IMR-90 (cell line): ENCODE measurements at regions of chr15 and their contacts with region 1.

Region 1: GRCh38 chr15:34708422-34708821 is 46.4 kb downstream of the GJD2 start:
- DNase-seq: peak; percentile 66
- ATAC-seq: peak; percentile 82
- H3K4me3 ChIP-seq: no peak overlapping the region
- H3K27ac ChIP-seq: no peak overlapping the region
- H3K4me1 ChIP-seq: peaks cover 5% of the 10 kb centered on the region
- H3K27me3 ChIP-seq: peaks cover 8% of the 10 kb centered on the region
- CTCF ChIP-seq: peak; percentile 91
- POLR2A ChIP-seq: no peak
- RAD21 ChIP-seq: peak; percentile 86

Region 2: GRCh38 chr15:34621675-34622074 is 86.7 kb before region 1 on chr15:
- CTCF ChIA-PET with region 1: interaction called, 5 read pairs
- POLR2A ChIA-PET with region 1: no interaction called
- dilution Hi-C with region 1: no loop called
- in situ Hi-C with region 1: no loop called
- intact Hi-C with region 1: loop called (anchors 2 kb)
- DNase-seq: peak; percentile 58
- ATAC-seq: peak; percentile 81
- H3K4me3 ChIP-seq: no peak overlapping the region
- H3K27ac ChIP-seq: no peak overlapping the region
- H3K4me1 ChIP-seq: no peaks in the 10 kb centered on the region
- H3K27me3 ChIP-seq: peaks cover 3% of the 10 kb centered on the region
- CTCF ChIP-seq: peak; percentile 64
- POLR2A ChIP-seq: no peak
- RAD21 ChIP-seq: peak; percentile 75

Region 3: GRCh38 chr15:34637305-34637704 is 71.1 kb before region 1 on chr15:
- CTCF ChIA-PET with region 1: no interaction called
- POLR2A ChIA-PET with region 1: no interaction called
- dilution Hi-C with region 1: no loop called
- in situ Hi-C with region 1: no loop called
- intact Hi-C with region 1: no loop called
- DNase-seq: no peak
- ATAC-seq: no peak
- H3K4me3 ChIP-seq: no peak overlapping the region
- H3K27ac ChIP-seq: no peak overlapping the region
- H3K4me1 ChIP-seq: no peaks in the 10 kb centered on the region; the same call in 1 of the 2 replicates
- H3K27me3 ChIP-seq: no peaks in the 10 kb centered on the region
- CTCF ChIP-seq: no peak
- POLR2A ChIP-seq: no peak
- RAD21 ChIP-seq: no peak

Region 4: GRCh38 chr15:34795267-34796081 is 87.1 kb after region 1 on chr15 and contains the start of gene ACTC1:
- CTCF ChIA-PET with region 1: no interaction called
- POLR2A ChIA-PET with region 1: no interaction called
- dilution Hi-C with region 1: no loop called
- in situ Hi-C with region 1: no loop called
- intact Hi-C with region 1: loop called (anchors 5 kb)
- DNase-seq: peak; percentile 52
- ATAC-seq: peak; percentile 95
- H3K4me3 ChIP-seq: no peak within 1 kb of the TSS
- H3K27ac ChIP-seq: no peak within 1 kb of the TSS; the same call in 1 of the 2 replicates
- H3K4me1 ChIP-seq: peaks cover 11% of the 10 kb centered on the region
- H3K27me3 ChIP-seq: peaks cover 1% of the 10 kb centered on the region; the same call in 1 of the 2 replicates
- CTCF ChIP-seq: peak; percentile 39; the same call in 1 of the 2 replicates
- POLR2A ChIP-seq: no peak
- RAD21 ChIP-seq: peak; percentile 49
- total RNA-seq, gene ACTC1: 0.83 and 1.1 TPM in 2 replicates

Region 5: DNA sequence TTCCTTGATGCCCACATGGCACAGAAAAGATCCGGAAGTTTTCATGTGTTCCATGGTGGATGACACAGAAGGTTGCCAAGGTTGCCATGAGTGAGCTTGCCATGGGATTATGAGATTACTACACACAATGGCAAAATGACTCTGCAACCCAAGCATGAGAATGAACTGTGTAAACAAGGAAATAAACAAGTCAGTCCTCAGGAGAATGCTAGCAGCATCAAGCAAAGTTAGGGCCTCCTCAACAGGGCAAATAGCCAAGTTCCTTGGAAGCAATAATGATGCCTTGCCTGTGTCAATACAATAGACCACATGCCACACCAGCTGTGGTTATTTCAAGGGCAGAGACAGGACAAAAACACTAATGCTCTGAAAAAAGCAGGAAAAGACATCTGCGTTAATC is 219.3 kb after region 1 on chr15:
- CTCF ChIA-PET with region 1: interaction called, 3 read pairs
- POLR2A ChIA-PET with region 1: no interaction called
- dilution Hi-C with region 1: no loop called
- in situ Hi-C with region 1: loop called (anchors 5 kb)
- intact Hi-C with region 1: no loop called
- DNase-seq: no peak
- ATAC-seq: no peak
- H3K4me3 ChIP-seq: no peak overlapping the region
- H3K27ac ChIP-seq: no peak overlapping the region
- H3K4me1 ChIP-seq: no peaks in the 10 kb centered on the region
- H3K27me3 ChIP-seq: no peaks in the 10 kb centered on the region
- CTCF ChIP-seq: no peak
- POLR2A ChIP-seq: no peak
- RAD21 ChIP-seq: no peak

Region 6: GRCh38 chr15:36645106-36645505 is 1936.7 kb after region 1 on chr15:
- CTCF ChIA-PET with region 1: no interaction called
- POLR2A ChIA-PET with region 1: no interaction called
- dilution Hi-C with region 1: no loop called
- in situ Hi-C with region 1: no loop called
- intact Hi-C with region 1: no loop called
- DNase-seq: peak; percentile 4
- ATAC-seq: no peak
- H3K4me3 ChIP-seq: no peak overlapping the region
- H3K27ac ChIP-seq: no peak overlapping the region
- H3K4me1 ChIP-seq: no peaks in the 10 kb centered on the region
- H3K27me3 ChIP-seq: no peaks in the 10 kb centered on the region
- CTCF ChIP-seq: peak; percentile 23; the same call in 1 of the 2 replicates
- POLR2A ChIP-seq: no peak
- RAD21 ChIP-seq: peak; percentile 23; the same call in 1 of the 2 replicates